Activated CD8-positive, alpha-beta T cell treated with anti-CD3 and anti-CD28 coated beads, Interleukin-2, amount 10 ng/mL, durations not matched to agents 7 days and 5 days (primary cell): ENCODE measurements at regions of chr4 and their contacts with region 1.

Region 1: DNA sequence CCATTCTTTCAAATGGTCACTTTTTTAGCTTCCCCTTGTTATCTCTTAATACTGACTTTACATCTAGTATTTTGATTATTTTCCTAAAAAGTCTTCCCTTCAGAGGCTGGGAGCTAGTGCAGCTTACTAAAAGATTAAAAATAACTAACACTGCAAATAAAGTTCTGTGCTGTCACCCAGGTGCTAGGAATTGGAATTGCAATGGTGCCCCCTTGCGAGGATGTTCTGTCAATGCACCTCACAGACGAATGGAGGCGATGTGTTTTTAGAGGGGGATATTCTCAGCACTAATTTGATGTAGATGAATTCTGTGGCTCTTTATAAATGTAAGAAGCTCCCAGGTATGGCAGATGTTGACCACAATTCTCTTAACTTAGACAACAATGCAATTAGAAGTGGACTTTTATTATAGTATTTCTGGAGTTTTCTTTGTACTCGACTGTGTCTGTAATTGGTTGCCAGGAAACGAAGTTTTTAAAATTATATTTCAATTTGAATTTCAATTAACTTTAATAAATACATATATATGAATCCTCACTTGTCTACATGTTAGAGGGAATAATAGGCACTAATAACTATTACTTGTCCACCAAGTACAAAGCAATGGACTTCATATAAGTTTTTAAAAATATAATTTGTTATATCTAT is 22.0 kb upstream of the SMIM31 start:
- DNase-seq: peak; percentile 60
- ATAC-seq: peak; percentile 42
- H3K4me3 Mint-ChIP-seq: no peak overlapping the region
- H3K27ac Mint-ChIP-seq: no peak overlapping the region
- H3K4me1 Mint-ChIP-seq: peaks cover 6% of the 10 kb centered on the region
- H3K27me3 Mint-ChIP-seq: peaks cover 12% of the 10 kb centered on the region

Region 2: GRCh38 chr4:164716901-164717300 is 15.1 kb before region 1 on chr4:
- CTCF ChIA-PET with region 1: interaction called, 10 read pairs
- POLR2A ChIA-PET with region 1: no interaction called
- DNase-seq: no peak
- ATAC-seq: no peak
- H3K4me3 Mint-ChIP-seq: no peak overlapping the region
- H3K27ac Mint-ChIP-seq: no peak overlapping the region
- H3K4me1 Mint-ChIP-seq: no peaks in the 10 kb centered on the region
- H3K27me3 Mint-ChIP-seq: peaks cover 3% of the 10 kb centered on the region

Region 3: GRCh38 chr4:165060942-165061341 is 329.0 kb after region 1 on chr4:
- CTCF ChIA-PET with region 1: no interaction called
- POLR2A ChIA-PET with region 1: no interaction called
- DNase-seq: no peak
- ATAC-seq: no peak
- H3K4me3 Mint-ChIP-seq: no peak overlapping the region
- H3K27ac Mint-ChIP-seq: no peak overlapping the region
- H3K4me1 Mint-ChIP-seq: no peaks in the 10 kb centered on the region
- H3K27me3 Mint-ChIP-seq: no peaks in the 10 kb centered on the region